ENCODE measurements at regions of chr2 and their contacts with region 1.

Region 1: DNA sequence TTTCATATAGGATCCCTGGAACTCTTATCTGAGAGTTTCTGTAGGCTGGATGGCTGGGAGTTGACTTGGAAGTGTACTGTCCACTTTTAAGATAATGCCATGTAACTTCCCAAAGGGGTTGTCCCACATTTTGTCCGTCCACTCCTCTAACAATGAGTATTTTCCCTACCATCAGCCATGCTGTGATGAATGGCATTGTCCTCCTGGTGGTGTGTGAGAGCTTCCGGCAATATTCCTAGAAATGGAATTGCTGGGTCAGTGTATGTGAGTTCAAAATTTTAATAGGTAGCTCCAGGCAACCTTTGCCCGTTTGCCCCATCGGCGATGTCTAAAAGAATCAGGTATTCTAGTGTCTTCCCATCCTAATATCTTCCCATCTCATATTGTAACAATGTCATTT is 185.0 kb downstream of the NDUFA10 start:
- DNase-seq: no peak
- ATAC-seq: 0 out of 2 replicates have a peak, but pooled peaks have one; percentile 46
- H3K4me3 ChIP-seq: no peak overlapping the region
- H3K27ac ChIP-seq: no peak overlapping the region
- H3K4me1 ChIP-seq: no peaks in the 10 kb centered on the region
- H3K27me3 ChIP-seq: peaks cover 15% of the 10 kb centered on the region
- CTCF ChIP-seq: peak in 2 of 3 experiments; percentile 15 to 18; a peak in 1 of 6 replicates
- POLR2A ChIP-seq: no peak
- RAD21 ChIP-seq: peak; percentile 26; the same call in 1 of the 2 replicates

Region 2: DNA sequence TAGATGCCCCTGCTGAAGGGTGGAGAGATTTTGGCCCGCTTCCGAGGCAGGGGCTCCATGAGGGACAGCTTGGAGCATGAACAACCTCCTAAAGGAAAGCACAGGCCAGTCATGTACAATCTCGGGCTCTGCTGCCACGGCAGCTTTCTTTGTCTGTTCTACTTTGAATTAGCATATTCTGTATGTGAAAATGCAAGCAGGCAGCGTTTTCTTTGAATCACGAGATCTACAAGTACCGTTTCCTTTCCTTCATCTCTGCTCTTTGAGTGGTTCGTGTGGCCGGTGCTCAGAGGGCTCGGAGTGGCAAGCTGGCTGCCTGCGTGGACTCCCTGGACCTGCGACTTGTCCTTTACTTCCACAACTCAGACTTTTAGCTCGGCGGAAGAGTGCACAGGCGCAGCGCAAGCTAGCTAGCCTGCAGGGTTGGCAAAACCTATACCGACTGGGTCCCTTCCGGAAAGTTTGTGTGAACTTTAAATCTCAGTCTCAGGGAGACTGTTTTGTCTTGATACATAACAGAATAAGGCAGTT is 985.4 kb before region 1 on chr2:
- CTCF ChIA-PET with region 1: no interaction called
- POLR2A ChIA-PET with region 1: no interaction called
- RAD21 ChIA-PET with region 1: no interaction called
- intact Hi-C with region 1: loop called (anchors 5 kb)
- DNase-seq: no peak
- ATAC-seq: no peak
- H3K4me3 ChIP-seq: no peak overlapping the region
- H3K27ac ChIP-seq: no peak overlapping the region
- H3K4me1 ChIP-seq: no peaks in the 10 kb centered on the region
- H3K27me3 ChIP-seq: peaks cover 6% of the 10 kb centered on the region; the same call in 1 of the 2 replicates
- CTCF ChIP-seq: no peak
- POLR2A ChIP-seq: no peak
- RAD21 ChIP-seq: no peak

Region 3: DNA sequence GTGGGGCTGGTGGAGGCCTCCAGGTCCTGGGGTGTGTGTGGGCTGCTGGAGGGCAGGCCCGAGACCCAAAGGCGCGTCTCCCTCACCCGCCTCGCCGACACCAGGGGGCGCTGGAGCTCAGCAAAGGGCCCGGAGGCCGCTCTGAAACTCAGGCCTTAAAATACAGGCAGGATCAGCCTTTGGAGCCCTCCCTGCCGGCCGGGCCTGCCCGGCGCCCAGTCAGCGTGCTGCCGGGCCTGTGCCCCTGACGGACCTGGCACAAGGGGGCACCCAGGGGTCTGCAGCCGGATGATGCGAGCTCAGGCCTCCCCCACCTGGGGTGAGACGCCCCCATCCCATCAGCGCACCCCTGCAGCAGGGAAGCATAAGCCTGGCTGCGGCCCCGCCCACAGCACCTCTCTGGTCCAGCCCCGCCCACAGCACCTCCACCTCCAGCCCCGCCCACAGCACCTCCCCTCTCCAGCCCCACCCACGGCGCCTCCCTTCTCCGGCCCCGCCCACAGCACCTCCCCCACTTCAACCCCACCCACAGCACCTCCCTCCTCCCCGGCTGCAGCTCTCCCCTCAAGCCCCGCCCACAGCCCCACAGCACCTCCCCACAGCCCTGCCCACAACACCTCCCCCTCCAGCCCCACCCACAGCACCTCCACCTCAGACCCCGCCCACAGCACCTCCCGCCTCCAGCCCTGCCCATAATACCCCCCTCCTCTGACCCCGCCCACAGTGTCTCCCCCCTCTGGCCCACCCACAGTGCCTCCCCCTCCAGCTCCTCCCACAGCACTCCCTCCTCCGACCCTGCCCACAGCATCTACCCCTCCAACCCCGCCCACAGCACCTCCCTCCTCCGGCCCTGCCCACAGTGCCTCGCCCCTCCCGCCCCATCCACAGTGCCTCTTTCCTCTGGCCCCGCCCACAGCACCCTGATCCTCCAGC is 393.1 kb after region 1 on chr2:
- CTCF ChIA-PET with region 1: no interaction called
- POLR2A ChIA-PET with region 1: no interaction called
- RAD21 ChIA-PET with region 1: no interaction called
- intact Hi-C with region 1: no loop called
- DNase-seq: peak; percentile 88
- ATAC-seq: peak; percentile 84
- H3K4me3 ChIP-seq: peak overlapping the region; percentile 35 to 49
- H3K27ac ChIP-seq: peak overlapping the region; percentile 65
- H3K4me1 ChIP-seq: peaks cover 4 to 40% of the 10 kb centered on the region in 2 experiments
- H3K27me3 ChIP-seq: no peaks in the 10 kb centered on the region
- CTCF ChIP-seq: peak; percentile 84 to 96 (median 85)
- POLR2A ChIP-seq: no peak
- RAD21 ChIP-seq: peak; percentile 100

Measured in HCT116 (cell line).